Right ventricle myocardium inferior (tissue), 1 donor: ENCODE measurements at regions of chr4 and their contacts with region 1.

Region 1: DNA sequence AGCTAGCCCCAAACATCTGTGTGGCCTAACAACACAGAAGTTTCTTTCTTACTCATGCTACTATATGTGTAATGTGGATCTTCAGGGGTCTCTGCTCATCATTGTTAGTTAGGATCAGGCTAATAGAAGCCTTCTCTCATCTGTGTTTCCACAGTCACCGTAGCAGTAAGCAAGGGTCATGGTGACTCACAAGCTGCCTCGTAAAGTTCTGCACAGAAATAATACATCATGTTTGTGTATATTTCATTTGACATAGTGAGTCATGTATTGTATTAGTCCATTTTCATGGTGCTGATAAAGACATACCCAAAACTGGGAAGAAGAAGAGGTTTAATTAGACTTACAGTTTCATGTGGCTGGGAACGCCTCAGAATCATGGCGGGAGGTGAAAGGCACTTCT is 38.7 kb downstream of the SLC4A4 start:
- DNase-seq: no peak
- ATAC-seq: no peak

Region 2: DNA sequence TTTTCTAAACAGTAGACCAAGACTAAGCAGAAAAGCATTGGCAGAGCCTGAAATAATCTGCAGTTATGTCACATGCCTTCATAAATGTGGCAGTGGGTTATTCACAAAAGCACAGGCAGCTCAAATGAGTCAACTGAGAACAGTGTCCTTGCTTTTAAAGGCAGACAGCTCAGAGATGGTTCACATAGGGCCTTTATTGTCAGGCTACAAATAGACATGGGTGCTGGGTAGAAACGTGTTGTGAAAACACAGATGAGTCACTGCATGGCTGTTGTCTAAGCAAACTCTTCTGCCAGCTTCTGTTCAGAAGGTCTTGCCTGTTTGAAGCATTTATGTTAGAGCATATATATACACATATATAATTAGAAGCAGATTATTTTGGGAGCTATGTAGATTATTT is 79.3 kb after region 1 on chr4:
- intact Hi-C with region 1: loop called (anchors 5 kb)
- DNase-seq: no peak
- ATAC-seq: peak; percentile 85